ENCODE measurements at regions of chr5 and their contacts with region 1.

Region 1: DNA sequence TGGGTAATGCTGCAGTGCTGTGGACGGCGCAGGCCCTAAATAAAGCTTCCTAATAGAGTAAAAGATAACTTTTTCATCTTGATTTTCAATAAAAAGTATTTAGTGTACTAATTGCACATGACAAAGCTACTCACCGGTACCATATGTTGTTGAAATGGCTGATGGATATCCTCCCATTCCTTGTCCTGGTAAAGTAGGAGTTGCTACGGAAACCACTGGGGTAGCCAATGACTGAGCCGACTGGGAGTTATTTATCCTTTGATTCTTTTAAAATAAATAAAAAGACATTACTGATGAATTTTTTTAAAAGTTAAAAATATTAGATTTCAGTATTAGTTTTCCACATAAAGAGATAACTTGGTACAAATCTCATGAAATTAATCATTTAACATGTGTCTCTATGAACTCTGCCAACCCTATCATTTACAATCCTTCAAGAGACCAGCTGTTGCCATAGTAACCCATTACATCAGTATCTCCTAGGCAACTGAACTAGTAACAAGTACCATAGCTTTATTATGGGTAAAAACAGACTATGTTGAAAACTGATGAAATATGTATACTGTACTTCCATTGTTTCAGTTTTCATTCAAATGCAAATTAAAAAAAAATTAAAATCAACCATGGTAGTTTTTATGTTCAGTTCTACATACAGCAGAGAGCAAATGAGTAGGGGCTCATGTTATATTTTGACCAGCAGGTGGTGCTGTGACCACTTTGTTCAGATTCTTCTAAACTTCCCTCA is 153.7 kb downstream of the MEF2C start:
- DNase-seq: peak; percentile 77 to 83
- H3K4me3 ChIP-seq: no peak overlapping the region
- H3K4me1 ChIP-seq: no peaks in the 10 kb centered on the region; the same call in 1 of the 2 replicates
- H3K27me3 ChIP-seq: no peaks in the 10 kb centered on the region

Region 2: GRCh38 chr5:89703817-89704216 is 974.6 kb after region 1 on chr5:
- in situ Hi-C with region 1: loop called (anchors 25 kb)
- DNase-seq: peak; percentile 61 to 97
- H3K4me3 ChIP-seq: no peak overlapping the region
- H3K4me1 ChIP-seq: peaks cover 35% of the 10 kb centered on the region
- H3K27me3 ChIP-seq: no peaks in the 10 kb centered on the region